Activated naive CD4-positive, alpha-beta T cell treated with anti-CD3 and anti-CD28 coated beads for 36 hours (primary cell): ENCODE measurements at regions of chr10 and their contacts with region 1.

Region 1: DNA sequence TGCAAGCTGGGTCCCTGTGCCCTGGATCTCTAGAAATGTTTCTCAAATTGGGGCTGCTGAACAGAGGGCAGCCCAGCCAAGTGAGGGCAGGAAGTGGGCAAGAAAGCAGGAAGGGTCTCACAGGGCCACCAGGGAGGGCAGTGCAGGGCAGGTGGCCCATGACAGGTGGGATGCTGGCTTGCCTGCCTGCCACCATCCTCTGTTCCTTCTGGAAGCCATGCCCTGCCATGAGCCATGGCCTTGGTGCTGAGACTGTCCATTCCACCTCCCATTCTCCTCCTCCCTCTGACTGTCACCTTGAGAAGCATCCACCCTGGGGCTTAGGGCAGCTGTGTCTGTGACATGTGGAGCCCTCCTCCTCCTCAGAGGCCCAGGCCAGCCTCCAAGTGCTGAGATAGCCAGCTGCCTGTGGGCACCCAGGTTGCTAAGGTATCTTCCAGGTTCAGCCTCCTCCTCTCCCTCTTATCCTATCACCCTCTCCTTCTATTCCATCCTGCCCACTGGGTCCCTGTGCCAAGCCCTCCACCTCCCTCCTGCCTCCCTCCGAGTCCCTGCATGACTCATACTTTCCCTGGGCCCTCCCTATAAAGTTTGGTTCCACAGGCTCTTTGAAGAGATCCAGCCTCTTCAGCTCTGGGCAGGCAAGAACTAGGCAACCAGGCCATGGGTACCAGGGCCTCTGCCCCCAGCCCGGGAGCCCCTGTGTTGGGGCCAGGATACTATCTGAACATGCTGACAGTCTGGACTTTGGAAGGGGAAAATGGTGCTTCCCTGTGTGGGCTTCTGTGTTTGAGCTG is 1.3 kb downstream of the VSIR start:
- DNase-seq: peak; percentile 76
- H3K4me3 Mint-ChIP-seq: peak overlapping the region; percentile 88
- H3K27ac Mint-ChIP-seq: peak overlapping the region; percentile 98
- H3K4me1 Mint-ChIP-seq: peaks cover 73% of the 10 kb centered on the region
- H3K27me3 Mint-ChIP-seq: no peaks in the 10 kb centered on the region

Region 2: DNA sequence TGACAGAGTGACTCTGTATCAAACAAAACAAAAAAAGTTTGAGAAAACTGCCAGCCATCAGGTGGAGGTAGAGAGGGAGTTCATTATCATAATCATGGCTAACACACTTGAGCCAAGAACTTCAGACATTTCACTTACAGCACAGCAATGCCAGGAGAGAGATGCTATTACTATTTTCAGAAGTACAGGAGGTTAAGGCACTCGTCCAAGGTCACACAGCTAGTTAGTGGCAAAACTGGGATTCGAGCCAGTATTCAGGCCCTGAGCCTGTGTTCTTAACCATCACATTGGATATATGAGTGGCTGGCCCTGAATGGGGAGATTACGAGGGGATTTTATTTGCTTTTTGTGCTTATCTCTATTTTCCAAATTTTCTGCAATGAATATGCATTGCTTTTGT is 584.4 kb before region 1 on chr10:
- CTCF ChIA-PET with region 1: no interaction called
- intact Hi-C with region 1: no loop called
- DNase-seq: no peak
- H3K4me3 Mint-ChIP-seq: no peak overlapping the region
- H3K27ac Mint-ChIP-seq: no peak overlapping the region
- H3K4me1 Mint-ChIP-seq: no peaks in the 10 kb centered on the region
- H3K27me3 Mint-ChIP-seq: no peaks in the 10 kb centered on the region

Region 3: DNA sequence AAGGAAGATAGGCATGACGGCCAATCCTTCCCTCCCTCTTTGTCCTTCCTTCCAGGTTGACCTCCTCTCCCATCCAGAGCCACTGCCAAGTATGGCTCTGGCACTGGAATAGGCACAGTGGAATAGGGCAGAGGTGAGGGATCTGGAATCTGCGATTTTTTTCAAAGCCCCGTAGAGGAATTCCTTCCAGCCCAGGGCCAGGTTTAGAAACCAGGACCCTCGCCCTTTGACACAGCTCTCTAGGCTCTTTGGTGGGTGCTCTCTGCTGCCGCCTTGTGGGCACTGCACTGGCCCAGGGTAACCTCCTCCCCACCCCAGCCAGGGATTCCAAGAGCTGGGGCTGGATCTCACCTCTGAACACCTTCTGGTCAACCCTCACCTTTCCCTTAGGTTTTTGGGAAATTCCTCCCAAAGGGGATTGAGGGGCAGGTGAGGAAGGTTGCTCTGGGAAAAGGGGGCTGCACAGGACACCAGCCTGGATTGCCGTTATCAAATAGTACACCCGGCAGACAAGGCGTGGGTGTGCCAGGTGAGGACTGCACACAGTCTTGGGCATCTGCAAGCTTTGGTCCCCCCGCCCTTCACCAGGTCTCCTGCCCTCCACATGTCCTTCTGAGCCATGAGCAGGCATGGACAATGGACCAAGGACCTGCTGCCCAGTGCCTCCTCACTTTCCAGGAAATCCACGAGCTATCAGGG is 75.2 kb before region 1 on chr10:
- CTCF ChIA-PET with region 1: interaction called, 34 read pairs
- intact Hi-C with region 1: no loop called
- DNase-seq: peak; percentile 76
- H3K4me3 Mint-ChIP-seq: no peak overlapping the region
- H3K27ac Mint-ChIP-seq: no peak overlapping the region
- H3K4me1 Mint-ChIP-seq: peaks cover 35% of the 10 kb centered on the region
- H3K27me3 Mint-ChIP-seq: no peaks in the 10 kb centered on the region

Region 4: DNA sequence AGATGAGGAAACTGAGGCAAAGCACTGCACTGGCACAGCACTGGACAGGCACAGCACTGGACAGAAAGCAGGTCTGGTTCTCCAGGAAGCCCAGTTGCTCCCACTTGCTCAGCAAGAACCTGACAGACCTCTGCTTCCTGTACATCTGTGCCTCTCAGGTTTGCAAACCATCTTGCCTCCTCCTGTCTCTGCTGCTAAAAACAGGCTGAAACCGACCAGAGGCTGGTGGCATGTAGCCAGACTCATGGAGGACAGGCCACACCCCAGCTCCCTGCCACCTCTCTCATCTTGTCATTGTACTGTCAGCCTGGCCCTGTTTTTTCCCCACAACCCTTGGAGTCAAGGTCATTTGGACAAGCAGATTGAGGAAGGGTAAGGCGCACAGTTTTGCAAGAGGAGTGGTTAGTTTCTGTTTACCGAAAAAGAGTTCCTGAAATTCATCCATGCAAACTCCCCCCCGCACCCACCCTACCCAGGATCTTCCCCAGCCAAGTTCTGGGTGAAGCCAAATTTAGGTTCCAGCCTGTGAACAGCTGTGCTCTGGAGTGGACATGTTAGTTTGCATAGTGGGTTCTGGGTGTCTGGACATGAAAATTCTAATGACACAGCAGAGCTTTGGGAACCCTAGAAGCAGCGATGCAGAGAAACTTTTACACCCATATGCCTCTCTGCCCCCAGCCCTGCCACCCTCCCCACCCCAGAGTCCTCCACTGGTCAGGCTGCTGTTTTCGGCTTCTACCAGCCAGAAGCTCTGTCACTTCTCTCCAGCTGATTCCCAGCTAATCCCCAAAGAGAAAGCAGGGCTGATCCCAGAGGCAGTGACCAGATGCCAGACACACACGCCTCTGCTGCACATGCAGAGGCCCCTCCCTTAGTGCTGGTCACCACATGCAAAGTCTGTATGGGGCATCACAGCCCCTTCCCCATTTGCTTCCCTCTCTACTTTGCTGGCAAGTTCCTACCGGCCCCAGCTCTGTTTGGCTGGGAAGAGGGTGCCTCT is 44.0 kb before region 1 on chr10:
- CTCF ChIA-PET with region 1: interaction called, 29 read pairs
- intact Hi-C with region 1: loop called (anchors 1 kb)
- DNase-seq: peak; percentile 87
- H3K4me3 Mint-ChIP-seq: peak overlapping the region; percentile 64
- H3K27ac Mint-ChIP-seq: peak overlapping the region; percentile 98
- H3K4me1 Mint-ChIP-seq: peaks cover 90% of the 10 kb centered on the region
- H3K27me3 Mint-ChIP-seq: no peaks in the 10 kb centered on the region

Region 5: GRCh38 chr10:71756311-71757191 is 15.5 kb before region 1 on chr10:
- CTCF ChIA-PET with region 1: interaction called, 47 read pairs
- intact Hi-C with region 1: loop called (anchors 1 kb)
- DNase-seq: peak; percentile 71
- H3K4me3 Mint-ChIP-seq: peak overlapping the region; percentile 68
- H3K27ac Mint-ChIP-seq: peak overlapping the region; percentile 96
- H3K4me1 Mint-ChIP-seq: peaks cover 88% of the 10 kb centered on the region
- H3K27me3 Mint-ChIP-seq: no peaks in the 10 kb centered on the region

Region 6: GRCh38 chr10:71850637-71851464 is 78.8 kb after region 1 on chr10 and contains the start of gene PSAP:
- CTCF ChIA-PET with region 1: no interaction called
- intact Hi-C with region 1: loop called (anchors 1 kb)
- DNase-seq: peak; percentile 99
- H3K4me3 Mint-ChIP-seq: peak within 1 kb of the TSS; percentile 91
- H3K27ac Mint-ChIP-seq: peak within 1 kb of the TSS; percentile 65
- H3K4me1 Mint-ChIP-seq: peaks cover 42% of the 10 kb centered on the region
- H3K27me3 Mint-ChIP-seq: no peaks in the 10 kb centered on the region
- total RNA-seq, gene PSAP: 129 to 133 TPM

Region 7: GRCh38 chr10:72026278-72027111 is 254.5 kb after region 1 on chr10:
- CTCF ChIA-PET with region 1: no interaction called
- intact Hi-C with region 1: no loop called
- DNase-seq: no peak
- H3K4me3 Mint-ChIP-seq: no peak overlapping the region
- H3K27ac Mint-ChIP-seq: no peak overlapping the region
- H3K4me1 Mint-ChIP-seq: peaks cover 8% of the 10 kb centered on the region
- H3K27me3 Mint-ChIP-seq: no peaks in the 10 kb centered on the region

Region 8: DNA sequence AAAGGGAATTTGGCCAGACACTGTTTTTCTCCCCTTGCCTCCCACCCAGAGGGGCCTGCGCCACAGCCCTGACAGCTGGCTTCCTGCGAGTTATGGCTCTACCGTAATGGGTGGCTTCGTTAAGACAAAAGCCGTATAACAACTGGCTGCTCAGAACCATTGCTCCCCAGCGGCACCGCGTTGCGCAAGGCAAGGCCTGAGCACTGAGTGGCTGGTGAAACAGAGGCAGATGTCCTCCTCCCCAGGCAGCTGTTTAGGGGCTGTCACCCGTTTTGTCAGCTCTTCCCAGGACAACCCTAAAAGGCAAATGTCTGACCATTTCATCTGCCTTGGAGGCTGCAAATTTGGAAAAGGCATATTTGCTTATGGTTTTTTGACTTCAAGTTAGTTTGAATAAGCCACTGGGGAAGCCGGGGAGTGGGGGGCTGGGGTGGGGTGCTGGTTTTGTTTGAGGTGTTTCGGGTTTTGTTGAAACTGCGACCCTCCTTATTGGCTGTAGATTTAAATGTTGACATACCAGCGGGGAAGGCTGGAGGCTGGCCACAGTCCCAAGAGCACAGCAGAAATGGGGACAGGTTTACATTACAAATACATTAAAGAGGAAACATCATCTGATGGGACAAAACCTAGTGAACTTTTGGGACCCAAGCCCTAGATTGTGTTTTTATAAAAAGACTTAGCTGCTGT is 317.0 kb after region 1 on chr10:
- CTCF ChIA-PET with region 1: no interaction called
- intact Hi-C with region 1: loop called (anchors 2 kb)
- DNase-seq: peak; percentile 81
- H3K4me3 Mint-ChIP-seq: peak overlapping the region; percentile 99
- H3K27ac Mint-ChIP-seq: peak overlapping the region; percentile 99
- H3K4me1 Mint-ChIP-seq: peaks cover 63% of the 10 kb centered on the region
- H3K27me3 Mint-ChIP-seq: no peaks in the 10 kb centered on the region